HAP-1 (cell line): ENCODE measurements at regions of chr6 and their contacts with region 1.

Region 1: DNA sequence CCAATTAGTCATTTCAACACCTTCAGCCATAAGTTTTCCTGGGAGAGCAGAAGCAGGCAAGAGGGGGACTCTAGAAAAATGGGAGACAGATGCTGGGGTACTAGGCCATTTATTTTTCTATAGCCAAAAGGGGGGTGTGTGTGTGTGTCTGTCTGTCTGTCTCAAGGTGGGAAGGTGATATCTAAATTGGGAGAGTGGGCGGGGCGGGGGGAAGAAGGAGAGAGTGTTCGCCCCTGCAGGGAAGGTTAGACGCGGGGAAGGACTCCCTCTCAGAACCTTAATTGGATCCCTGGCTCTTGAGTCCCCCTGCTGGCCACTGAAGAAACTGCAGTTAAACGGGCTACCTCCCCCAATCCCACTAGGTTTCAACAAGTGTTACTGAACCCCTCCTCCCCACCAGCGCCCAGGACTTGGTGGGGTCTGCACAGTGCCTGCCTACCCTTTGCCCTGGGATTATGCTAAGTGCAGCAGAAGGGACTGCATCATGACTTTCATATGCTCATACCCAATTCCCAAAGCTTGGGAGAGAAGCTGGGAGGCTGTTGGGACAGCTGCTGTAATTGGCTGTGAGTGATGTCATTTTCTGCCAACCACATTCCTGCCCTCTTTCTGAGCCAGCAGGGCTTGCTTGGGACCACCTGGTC is 45.8 kb downstream of the FOXP4 start:
- DNase-seq: peak; percentile 69 to 85
- H3K4me3 ChIP-seq: no peak overlapping the region
- H3K4me1 ChIP-seq: no peaks in the 10 kb centered on the region
- H3K27me3 ChIP-seq: no peaks in the 10 kb centered on the region

Region 2: GRCh38 chr6:41371461-41371991 is 220.5 kb before region 1 on chr6:
- in situ Hi-C with region 1: loop called (anchors 5 kb)
- DNase-seq: peak in 1 of 2 experiments; percentile 65
- H3K4me3 ChIP-seq: no peak overlapping the region
- H3K4me1 ChIP-seq: peaks cover 11% of the 10 kb centered on the region
- H3K27me3 ChIP-seq: peaks cover 51% of the 10 kb centered on the region

Region 3: GRCh38 chr6:41424370-41425058 is 167.5 kb before region 1 on chr6:
- in situ Hi-C with region 1: loop called (anchors 5 kb)
- DNase-seq: peak; percentile 76 to 91
- H3K4me3 ChIP-seq: no peak overlapping the region
- H3K4me1 ChIP-seq: no peaks in the 10 kb centered on the region; the same call in 1 of the 2 replicates
- H3K27me3 ChIP-seq: peaks cover 58% of the 10 kb centered on the region

Region 4: DNA sequence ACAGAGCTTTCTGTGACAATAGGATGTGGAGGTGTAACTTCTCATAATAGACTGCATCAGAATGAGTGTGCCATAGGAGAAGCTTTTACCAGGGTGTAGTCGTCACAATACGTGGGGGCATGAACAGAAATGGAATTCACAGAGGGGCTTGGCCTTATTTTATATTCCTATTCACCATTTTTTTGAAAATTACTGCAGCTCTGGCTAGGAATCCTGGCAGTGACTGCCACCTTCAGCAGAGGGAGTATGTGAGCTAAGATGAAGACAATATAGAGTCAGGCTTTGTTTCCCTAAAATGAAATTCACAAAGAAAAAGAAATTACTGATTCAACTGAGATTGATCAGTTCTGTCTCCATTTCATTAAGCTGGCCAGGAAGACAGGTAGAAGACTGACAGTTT is 209.4 kb after region 1 on chr6:
- in situ Hi-C with region 1: no loop called
- DNase-seq: peak; percentile 25 to 26
- H3K4me3 ChIP-seq: no peak overlapping the region
- H3K4me1 ChIP-seq: no peaks in the 10 kb centered on the region
- H3K27me3 ChIP-seq: no peaks in the 10 kb centered on the region